Endothelial cell of umbilical vein (primary cell): ENCODE measurements at regions of chr10 and their contacts with region 1.

Region 1: DNA sequence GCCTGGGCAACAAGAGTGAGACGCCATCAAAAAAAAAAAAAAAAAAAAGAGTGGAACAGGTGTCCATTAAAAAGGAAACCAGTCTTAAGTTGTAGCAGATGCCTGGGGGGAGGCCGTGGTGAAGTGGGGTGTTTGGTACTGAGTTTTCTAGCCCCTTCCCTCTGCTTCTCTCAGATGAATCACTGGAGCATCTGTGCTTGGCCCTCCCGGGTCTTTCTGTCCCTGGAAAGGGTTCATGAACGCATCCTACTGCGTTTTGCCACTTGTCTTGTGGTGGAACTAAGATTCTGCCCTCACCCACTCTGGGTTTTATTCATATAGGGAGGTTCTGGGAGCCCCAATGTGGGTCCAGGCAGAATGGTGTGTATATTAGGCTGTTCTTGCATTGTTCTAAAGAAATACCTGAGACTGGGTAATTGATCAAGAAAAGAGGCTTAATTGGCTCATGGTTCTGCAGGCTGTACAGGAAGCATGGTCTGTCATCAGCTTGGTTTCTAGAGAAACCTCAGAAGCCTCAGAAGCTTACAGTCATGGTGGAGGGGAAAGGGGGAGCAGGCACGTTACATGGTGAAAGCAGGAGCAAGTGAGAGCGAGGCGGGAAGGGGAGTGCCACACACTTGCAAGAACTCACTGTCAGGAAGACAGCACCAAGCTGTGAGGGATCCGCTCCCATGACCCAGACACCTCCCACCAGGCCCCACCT is 63.5 kb downstream of the CAMK1D start:
- DNase-seq: no peak
- H3K4me3 ChIP-seq: no peak overlapping the region
- H3K27ac ChIP-seq: no peak overlapping the region
- H3K4me1 ChIP-seq: no peaks in the 10 kb centered on the region
- H3K27me3 ChIP-seq: peaks cover 0 to 4% of the 10 kb centered on the region in 2 experiments
- CTCF ChIP-seq: no peak
- POLR2A ChIP-seq: no peak

Region 2: DNA sequence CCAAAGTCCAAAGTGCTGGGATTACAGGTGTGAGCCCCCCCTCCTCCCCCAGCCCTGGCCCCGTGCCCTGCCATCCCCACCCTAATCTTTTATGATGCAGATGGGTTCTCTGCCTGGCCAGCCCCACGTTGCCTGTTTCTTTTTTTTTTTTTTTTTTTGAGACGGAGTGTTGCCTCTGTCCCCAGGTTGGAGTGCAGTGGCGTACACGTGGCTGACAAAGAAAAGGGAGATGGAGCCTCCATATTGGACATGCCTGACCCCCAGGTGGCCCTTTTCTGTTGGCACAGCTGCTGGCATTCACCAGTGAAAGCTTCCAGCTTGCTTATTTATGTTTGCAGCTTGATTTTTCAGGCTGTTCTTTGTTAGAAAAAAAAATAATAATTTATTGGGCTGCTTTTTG is 353.4 kb after region 1 on chr10:
- CTCF ChIA-PET with region 1: no interaction called
- POLR2A ChIA-PET with region 1: interaction called, 10 read pairs
- dilution Hi-C with region 1: no loop called
- intact Hi-C with region 1: no loop called
- DNase-seq: no peak
- H3K4me3 ChIP-seq: no peak overlapping the region
- H3K27ac ChIP-seq: no peak overlapping the region
- H3K4me1 ChIP-seq: no peaks in the 10 kb centered on the region
- H3K27me3 ChIP-seq: no peaks in the 10 kb centered on the region
- CTCF ChIP-seq: no peak
- POLR2A ChIP-seq: no peak

Region 3: GRCh38 chr10:12819071-12819470 is 406.3 kb after region 1 on chr10:
- CTCF ChIA-PET with region 1: no interaction called
- POLR2A ChIA-PET with region 1: no interaction called
- dilution Hi-C with region 1: no loop called
- intact Hi-C with region 1: no loop called
- DNase-seq: peak; percentile 20
- H3K4me3 ChIP-seq: no peak overlapping the region
- H3K27ac ChIP-seq: no peak overlapping the region
- H3K4me1 ChIP-seq: no peaks in the 10 kb centered on the region
- H3K27me3 ChIP-seq: no peaks in the 10 kb centered on the region
- CTCF ChIP-seq: no peak
- POLR2A ChIP-seq: no peak